CD8-positive, alpha-beta memory T cell (primary cell): ENCODE measurements at regions of chr18 and their contacts with region 1.

Region 1: DNA sequence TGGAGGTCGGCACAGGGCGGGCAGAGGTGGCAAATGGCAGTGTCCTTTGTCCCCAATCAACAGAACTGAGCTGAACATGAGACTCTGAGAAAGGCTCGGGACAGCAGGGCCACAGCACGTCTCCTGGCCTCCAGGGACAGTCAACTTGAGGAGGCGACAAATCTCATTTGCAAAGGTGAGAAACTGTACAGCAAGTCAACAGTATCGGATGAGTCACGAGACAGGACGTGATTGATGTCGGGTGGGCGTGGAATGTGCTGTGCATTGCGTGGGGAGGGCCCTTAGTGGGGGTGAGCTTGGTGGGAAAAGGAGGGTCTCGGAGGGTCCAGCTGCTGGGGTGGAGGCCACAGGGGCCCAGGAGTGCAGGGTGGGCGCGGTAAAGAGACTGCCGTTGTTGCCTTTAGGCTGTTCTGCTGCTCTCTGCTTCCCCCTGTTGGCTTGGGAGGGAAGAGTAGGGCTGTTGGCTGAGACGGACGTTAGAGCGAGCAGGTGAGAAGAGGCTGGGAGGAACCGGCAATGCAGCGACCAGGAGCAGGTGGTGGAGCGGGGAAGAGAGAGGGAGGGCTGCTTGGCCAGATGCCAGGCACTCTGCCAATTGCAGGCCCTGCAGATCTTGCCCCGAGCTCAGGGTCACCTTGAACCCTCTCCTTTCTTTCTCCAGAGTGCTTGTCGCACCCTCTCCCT is 164.3 kb downstream of the BCL2 start:
- DNase-seq: peak; percentile 68 to 90 (median 82)
- H3K4me3 ChIP-seq: peak overlapping the region; percentile 69
- H3K4me3 Mint-ChIP-seq: peak overlapping the region; percentile 77 to 92 (median 85)
- H3K27ac ChIP-seq: peak overlapping the region; percentile 68
- H3K27ac Mint-ChIP-seq: peak overlapping the region; percentile 92 to 99 (median 96)
- H3K4me1 ChIP-seq: peaks cover 97% of the 10 kb centered on the region
- H3K4me1 Mint-ChIP-seq: peaks cover 96 to 100% (median 100%) of the 10 kb centered on the region in 3 donors
- H3K27me3 ChIP-seq: no peaks in the 10 kb centered on the region
- H3K27me3 Mint-ChIP-seq: no peaks in the 10 kb centered on the region

Region 2: GRCh38 chr18:63131106-63131958 is 24.0 kb before region 1 on chr18:
- CTCF ChIA-PET with region 1: interaction called, 42 read pairs
- POLR2A ChIA-PET with region 1: interaction called, 4 read pairs
- DNase-seq: peak; percentile 35 to 69 (median 52)
- H3K4me3 ChIP-seq: no peak overlapping the region
- H3K4me3 Mint-ChIP-seq: no peak overlapping the region
- H3K27ac ChIP-seq: no peak overlapping the region
- H3K27ac Mint-ChIP-seq: peak overlapping the region; percentile 53 to 93 (median 88)
- H3K4me1 ChIP-seq: peaks cover 25% of the 10 kb centered on the region
- H3K4me1 Mint-ChIP-seq: peaks cover 29 to 35% (median 34%) of the 10 kb centered on the region in 3 donors
- H3K27me3 ChIP-seq: no peaks in the 10 kb centered on the region
- H3K27me3 Mint-ChIP-seq: peaks cover 0 to 2% of the 10 kb centered on the region in 2 donors

Region 3: GRCh38 chr18:63138436-63139340 is 16.6 kb before region 1 on chr18:
- CTCF ChIA-PET with region 1: interaction called, 42 read pairs
- POLR2A ChIA-PET with region 1: interaction called, 7 read pairs
- DNase-seq: no peak
- H3K4me3 ChIP-seq: peak overlapping the region; percentile 42
- H3K4me3 Mint-ChIP-seq: peak overlapping the region; percentile 53 to 94 (median 87)
- H3K27ac ChIP-seq: no peak overlapping the region
- H3K27ac Mint-ChIP-seq: peak overlapping the region; percentile 86 to 97 (median 94)
- H3K4me1 ChIP-seq: peaks cover 30% of the 10 kb centered on the region
- H3K4me1 Mint-ChIP-seq: peaks cover 52 to 79% (median 76%) of the 10 kb centered on the region in 3 donors
- H3K27me3 ChIP-seq: no peaks in the 10 kb centered on the region
- H3K27me3 Mint-ChIP-seq: peaks cover 0 to 2% of the 10 kb centered on the region in 2 donors

Region 4: GRCh38 chr18:63199743-63200241 is 44.5 kb after region 1 on chr18:
- CTCF ChIA-PET with region 1: interaction called, 10 read pairs
- POLR2A ChIA-PET with region 1: interaction called, 4 read pairs
- DNase-seq: peak in 4 of 5 donors; percentile 10 to 71 (median 60)
- H3K4me3 ChIP-seq: peak overlapping the region; percentile 87
- H3K4me3 Mint-ChIP-seq: no peak overlapping the region
- H3K27ac ChIP-seq: peak overlapping the region; percentile 10
- H3K27ac Mint-ChIP-seq: no peak overlapping the region
- H3K4me1 ChIP-seq: peaks cover 74% of the 10 kb centered on the region
- H3K4me1 Mint-ChIP-seq: peaks cover 32 to 49% (median 34%) of the 10 kb centered on the region in 3 donors
- H3K27me3 ChIP-seq: no peaks in the 10 kb centered on the region
- H3K27me3 Mint-ChIP-seq: no peaks in the 10 kb centered on the region

Region 5: DNA sequence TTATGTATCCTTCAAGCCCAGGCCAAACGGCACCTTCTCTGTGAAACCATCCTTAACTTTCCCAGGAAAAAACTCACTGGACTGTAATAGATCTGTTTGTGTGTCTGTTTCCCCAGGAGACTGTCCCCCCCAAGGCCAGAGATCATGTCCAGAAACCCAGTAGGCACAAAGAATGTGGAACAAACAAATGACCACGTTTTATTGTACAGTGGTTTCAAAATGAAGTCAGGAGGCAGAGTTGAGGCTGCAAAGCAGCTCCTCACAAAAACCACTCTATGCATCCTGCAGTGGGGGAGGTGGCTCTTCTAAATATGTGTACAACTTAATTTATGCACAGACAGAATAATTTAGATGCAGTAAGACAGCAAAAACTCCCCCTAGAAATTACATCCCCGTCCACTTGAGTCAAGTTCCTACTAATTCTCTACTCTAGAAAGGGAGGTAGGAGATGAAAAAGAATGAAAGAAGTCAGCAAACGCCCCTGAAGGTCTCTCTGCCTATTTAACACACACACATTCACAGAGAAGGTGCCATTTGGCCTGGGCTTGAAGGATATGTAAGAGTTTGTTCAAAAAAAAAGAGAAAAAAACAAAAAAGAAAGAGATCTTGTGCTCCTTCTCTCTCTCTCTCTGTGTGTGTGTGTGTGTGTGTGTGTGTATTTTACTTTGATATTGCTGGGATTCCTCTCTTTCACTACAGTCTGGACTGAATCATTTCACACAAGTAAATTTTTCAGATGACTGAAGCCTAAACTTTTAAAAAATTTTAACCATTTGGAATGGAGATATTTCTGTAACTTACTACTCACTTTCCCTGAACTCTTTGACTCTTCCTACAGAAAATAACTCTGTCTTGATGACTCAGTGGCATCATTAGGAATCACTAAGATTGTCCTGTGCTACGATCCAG is 144.8 kb after region 1 on chr18:
- CTCF ChIA-PET with region 1: interaction called, 18 read pairs
- POLR2A ChIA-PET with region 1: no interaction called
- DNase-seq: no peak
- H3K4me3 ChIP-seq: peak overlapping the region; percentile 4
- H3K4me3 Mint-ChIP-seq: peak overlapping the region; percentile 47 to 83 (median 74)
- H3K27ac ChIP-seq: no peak overlapping the region
- H3K27ac Mint-ChIP-seq: peak overlapping the region; percentile 89 to 98 (median 94)
- H3K4me1 ChIP-seq: peaks cover 71% of the 10 kb centered on the region
- H3K4me1 Mint-ChIP-seq: peaks cover 72 to 89% (median 83%) of the 10 kb centered on the region in 3 donors
- H3K27me3 ChIP-seq: no peaks in the 10 kb centered on the region
- H3K27me3 Mint-ChIP-seq: no peaks in the 10 kb centered on the region

Region 6: GRCh38 chr18:63307551-63308200 is 152.4 kb after region 1 on chr18:
- CTCF ChIA-PET with region 1: interaction called, 10 read pairs
- POLR2A ChIA-PET with region 1: no interaction called
- DNase-seq: no peak
- H3K4me3 ChIP-seq: no peak overlapping the region
- H3K4me3 Mint-ChIP-seq: peak overlapping the region in 2 of 7 donors; percentile 20 to 47
- H3K27ac ChIP-seq: no peak overlapping the region
- H3K27ac Mint-ChIP-seq: peak overlapping the region; percentile 21 to 93 (median 70)
- H3K4me1 ChIP-seq: peaks cover 60% of the 10 kb centered on the region
- H3K4me1 Mint-ChIP-seq: peaks cover 74 to 96% (median 89%) of the 10 kb centered on the region in 3 donors
- H3K27me3 ChIP-seq: no peaks in the 10 kb centered on the region
- H3K27me3 Mint-ChIP-seq: no peaks in the 10 kb centered on the region